ENCODE measurements at regions of chr20 and their contacts with region 1.

Region 1: GRCh38 chr20:59571551-59572314 is 32.6 kb upstream of the PHACTR3 start:
- DNase-seq: no peak
- H3K4me3 ChIP-seq: peak overlapping the region; percentile 44
- H3K27me3 ChIP-seq: peaks cover 8% of the 10 kb centered on the region
- CTCF ChIP-seq: peak; percentile 96

Region 2: GRCh38 chr20:59365611-59366285 is 206.0 kb before region 1 on chr20:
- CTCF ChIA-PET with region 1: no interaction called
- POLR2A ChIA-PET with region 1: no interaction called
- DNase-seq: no peak
- H3K4me3 ChIP-seq: no peak overlapping the region
- H3K27me3 ChIP-seq: no peaks in the 10 kb centered on the region
- CTCF ChIP-seq: no peak

Region 3: GRCh38 chr20:59412875-59413284 is 158.9 kb before region 1 on chr20:
- CTCF ChIA-PET with region 1: no interaction called
- POLR2A ChIA-PET with region 1: no interaction called
- DNase-seq: no peak
- H3K4me3 ChIP-seq: no peak overlapping the region
- H3K27me3 ChIP-seq: no peaks in the 10 kb centered on the region
- CTCF ChIP-seq: no peak

Region 4: GRCh38 chr20:59560588-59561227 is 11.0 kb before region 1 on chr20:
- CTCF ChIA-PET with region 1: interaction called, 37 read pairs
- POLR2A ChIA-PET with region 1: no interaction called
- DNase-seq: no peak
- H3K4me3 ChIP-seq: no peak overlapping the region
- H3K27me3 ChIP-seq: no peaks in the 10 kb centered on the region
- CTCF ChIP-seq: peak; percentile 68

Region 5: DNA sequence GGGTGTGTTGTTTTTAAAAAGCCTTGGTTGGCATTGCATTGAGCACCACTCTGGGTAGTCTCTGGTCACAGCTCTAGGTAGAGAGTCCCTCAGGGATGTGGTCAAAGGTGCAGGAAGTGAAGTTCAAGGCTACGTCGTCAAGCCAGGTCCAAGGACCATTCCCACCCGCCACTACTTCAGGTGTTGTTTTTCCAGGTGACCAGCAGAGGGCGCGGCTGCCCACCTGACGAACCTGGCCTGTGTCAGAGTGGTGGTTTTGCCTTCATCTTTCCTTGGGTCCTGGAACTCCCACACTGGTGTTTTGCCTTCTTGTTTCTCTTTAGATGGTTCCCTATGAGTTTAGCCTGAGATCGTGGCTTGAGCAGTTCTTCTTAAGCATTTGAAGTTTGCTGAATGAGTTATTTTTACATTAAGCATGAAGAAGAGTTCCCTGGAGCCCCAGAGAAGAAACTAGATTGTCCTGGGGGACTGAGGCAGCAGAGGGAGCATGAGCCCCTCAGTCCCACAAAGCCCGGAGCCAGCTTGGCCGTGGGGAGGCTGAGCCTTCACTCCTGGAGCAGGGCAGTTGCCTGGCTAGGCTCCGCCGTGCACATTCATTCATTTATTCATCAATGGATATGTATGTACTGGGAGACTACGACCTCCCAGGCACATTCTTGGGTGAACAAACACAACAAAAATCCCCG is 27.0 kb after region 1 on chr20:
- CTCF ChIA-PET with region 1: interaction called, 17 read pairs
- POLR2A ChIA-PET with region 1: interaction called, 3 read pairs
- DNase-seq: no peak
- H3K4me3 ChIP-seq: no peak overlapping the region
- H3K27me3 ChIP-seq: peaks cover 9% of the 10 kb centered on the region
- CTCF ChIP-seq: peak; percentile 79

Region 6: DNA sequence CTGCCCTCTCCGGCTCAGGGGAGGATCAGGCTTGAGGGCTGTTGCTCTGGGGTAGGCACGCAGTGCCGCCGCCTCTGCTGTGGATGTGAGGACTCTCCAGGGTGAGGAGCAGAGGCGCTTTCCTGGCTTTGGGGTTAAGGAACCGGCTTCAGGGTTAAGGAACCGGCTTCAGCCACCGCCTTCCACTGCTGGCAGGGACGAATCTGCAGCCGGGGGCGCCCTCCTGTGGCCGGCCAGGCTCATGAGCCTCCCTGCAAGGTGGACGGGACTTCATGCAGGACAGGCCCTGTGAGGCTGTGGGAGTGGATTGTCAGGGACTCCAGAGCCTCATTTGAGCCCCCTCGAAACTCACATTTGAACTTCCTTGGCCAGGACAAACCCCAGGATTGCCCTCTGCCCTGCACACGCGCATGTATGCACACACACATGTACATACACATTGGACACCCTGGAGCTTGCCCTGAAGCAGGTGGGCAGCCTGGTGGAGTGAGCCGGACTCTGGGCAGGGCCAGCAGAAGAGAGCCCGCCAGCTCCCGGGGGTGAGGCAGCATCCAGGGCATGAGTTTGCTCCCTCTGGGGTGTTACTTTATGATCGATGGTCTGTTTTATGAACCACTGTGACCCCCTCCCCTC is 179.4 kb after region 1 on chr20:
- CTCF ChIA-PET with region 1: interaction called, 78 read pairs
- POLR2A ChIA-PET with region 1: interaction called, 4 read pairs
- DNase-seq: peak; percentile 9
- H3K4me3 ChIP-seq: no peak overlapping the region
- H3K27me3 ChIP-seq: peaks cover 5% of the 10 kb centered on the region; the same call in 1 of the 2 replicates
- CTCF ChIP-seq: peak; percentile 91

Measured in BJ (cell line).